B cell (primary cell): ENCODE measurements at regions of chr2 and their contacts with region 1.

Region 1: DNA sequence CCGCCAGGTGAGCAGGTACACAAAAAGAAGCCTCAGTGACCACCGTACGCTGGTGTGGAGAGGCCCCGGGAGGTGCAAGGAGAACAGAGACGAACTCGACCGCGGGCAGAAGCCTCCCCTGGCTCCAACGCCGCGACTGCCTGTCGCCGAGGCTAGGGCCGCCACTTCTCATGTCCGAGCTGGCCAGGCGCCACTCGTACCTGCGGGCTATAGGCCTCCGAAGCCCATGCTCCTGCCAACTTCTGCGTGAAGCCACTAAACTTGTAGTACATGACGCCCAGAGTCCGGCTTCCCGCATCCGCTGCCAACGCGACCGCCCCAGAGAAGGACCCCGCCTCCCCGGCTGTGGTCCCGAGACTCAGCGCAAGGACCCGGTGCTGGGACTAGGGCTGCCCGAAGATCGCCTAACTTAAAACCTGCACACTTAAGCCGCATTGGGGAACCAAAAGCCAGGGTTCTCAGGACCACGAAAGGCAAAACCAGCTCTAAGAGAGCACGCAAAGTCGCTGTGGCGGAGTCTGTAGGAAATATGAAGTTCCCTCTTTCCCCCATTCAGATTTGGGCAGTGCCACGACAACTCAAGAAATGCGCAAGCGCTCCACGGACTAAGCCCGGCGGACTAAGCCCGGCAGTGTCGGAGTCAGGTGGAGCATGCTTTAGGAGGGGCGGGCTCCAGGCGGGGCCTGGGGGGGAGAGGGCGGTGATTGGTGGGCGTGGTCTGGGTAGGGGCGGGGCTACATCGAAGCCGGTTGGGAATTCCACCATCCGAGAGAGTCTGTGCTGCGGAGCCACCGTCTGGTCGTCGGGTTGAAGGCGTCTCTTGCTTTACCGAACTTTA is at the start of gene COX7A2L:
- DNase-seq: peak; percentile 98
- ATAC-seq: peak; percentile 96
- H3K4me3 ChIP-seq: peak within 1 kb of the TSS; percentile 82 to 93 (median 87)
- H3K4me3 Mint-ChIP-seq: peak within 1 kb of the TSS; percentile 94
- H3K27ac ChIP-seq: peak within 1 kb of the TSS; percentile 92 to 93
- H3K27ac Mint-ChIP-seq: peak within 1 kb of the TSS; percentile 99
- H3K4me1 ChIP-seq: peaks cover 21 to 26% of the 10 kb centered on the region in 2 donors
- H3K4me1 Mint-ChIP-seq: peaks cover 40% of the 10 kb centered on the region
- H3K27me3 ChIP-seq: no peaks in the 10 kb centered on the region
- H3K27me3 Mint-ChIP-seq: peaks cover 11% of the 10 kb centered on the region
- CTCF ChIP-seq: peak; percentile 9
- total RNA-seq, gene COX7A2L: 66.7 and 68.1 TPM in 2 replicates

Region 2: DNA sequence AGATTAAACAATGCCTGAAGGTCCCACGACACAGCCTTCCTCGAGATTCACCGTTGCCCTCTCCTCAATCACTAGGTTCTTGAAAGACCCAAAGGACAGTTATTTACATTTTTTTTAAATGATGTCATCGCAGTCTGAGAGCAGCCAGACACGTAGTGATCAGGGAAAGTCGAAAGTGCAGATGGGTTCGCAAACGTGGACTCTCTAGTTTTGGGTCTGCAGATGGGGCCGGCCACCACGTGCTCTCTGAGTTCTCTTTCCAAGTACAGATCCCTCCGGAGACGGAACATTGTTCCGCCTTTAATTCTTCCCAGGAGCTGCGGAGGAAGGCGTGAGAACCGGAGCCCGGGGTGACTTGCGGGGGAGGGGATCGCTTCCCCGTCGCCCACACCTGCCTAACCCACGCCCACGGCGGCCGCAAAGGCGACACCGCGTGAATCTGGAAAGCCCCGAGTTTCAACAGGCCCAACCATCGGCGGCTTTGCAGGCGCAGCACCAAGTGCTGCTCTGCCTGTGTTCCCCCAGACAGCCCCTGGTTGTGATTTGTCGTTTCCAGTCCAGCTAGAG is 259.0 kb before region 1 on chr2:
- CTCF ChIA-PET with region 1: interaction called, 5 read pairs
- POLR2A ChIA-PET with region 1: no interaction called
- intact Hi-C with region 1: loop called (anchors 1 kb)
- DNase-seq: peak; percentile 98
- ATAC-seq: peak; percentile 69
- H3K4me3 ChIP-seq: peak overlapping the region; percentile 34 to 70 (median 52)
- H3K4me3 Mint-ChIP-seq: peak overlapping the region; percentile 88
- H3K27ac ChIP-seq: peak overlapping the region; percentile 98 to 99
- H3K27ac Mint-ChIP-seq: no peak overlapping the region
- H3K4me1 ChIP-seq: peaks cover 91 to 97% of the 10 kb centered on the region in 2 donors
- H3K4me1 Mint-ChIP-seq: peaks cover 70% of the 10 kb centered on the region
- H3K27me3 ChIP-seq: no peaks in the 10 kb centered on the region
- H3K27me3 Mint-ChIP-seq: no peaks in the 10 kb centered on the region
- CTCF ChIP-seq: no peak

Region 3: DNA sequence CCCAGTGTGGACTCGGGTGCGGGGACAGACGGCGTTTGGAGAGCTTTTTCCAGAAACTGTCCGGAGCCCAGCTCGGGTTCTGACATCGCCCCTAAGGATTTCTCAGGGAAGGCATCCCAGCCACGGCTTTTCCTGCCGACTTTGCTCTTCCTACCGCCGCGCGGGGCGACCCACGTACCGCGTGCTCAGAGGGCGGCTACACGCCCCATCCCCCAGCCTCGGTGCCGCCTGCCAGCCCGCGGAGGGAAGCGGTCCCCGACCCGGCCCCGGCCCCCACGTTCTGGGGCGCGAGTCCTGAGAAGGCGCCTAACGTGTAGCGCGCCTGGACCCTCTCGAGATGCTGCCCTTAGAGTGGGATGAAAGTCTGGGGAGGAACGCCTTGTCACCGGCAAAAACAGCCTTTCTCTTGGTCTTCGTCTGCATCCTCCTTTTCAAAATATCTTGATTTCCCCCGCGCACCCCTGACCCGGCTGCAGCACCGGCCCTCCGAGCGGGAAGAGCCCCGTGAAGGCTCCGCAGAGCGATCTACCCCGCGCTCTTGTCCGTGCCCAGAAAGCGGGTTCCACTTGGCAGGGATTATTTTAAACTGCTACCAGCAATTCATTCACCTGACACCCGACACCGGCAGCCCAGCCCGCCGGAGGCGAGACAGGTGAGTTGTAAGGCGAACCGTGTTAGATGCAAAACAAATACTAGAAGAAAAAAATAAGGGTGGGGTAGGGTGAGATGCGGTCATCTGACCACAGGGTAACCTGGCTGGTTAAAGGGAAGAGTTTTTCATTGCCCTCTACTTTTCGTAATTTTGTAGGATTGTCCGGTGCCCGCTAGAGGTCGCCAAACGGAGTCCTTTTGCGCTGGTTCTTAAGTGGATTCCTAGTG is 133.5 kb after region 1 on chr2:
- CTCF ChIA-PET with region 1: no interaction called
- POLR2A ChIA-PET with region 1: no interaction called
- intact Hi-C with region 1: loop called (anchors 2 kb)
- DNase-seq: peak; percentile 84
- ATAC-seq: peak; percentile 69
- H3K4me3 ChIP-seq: peak overlapping the region; percentile 46 to 62 (median 52)
- H3K4me3 Mint-ChIP-seq: peak overlapping the region; percentile 92
- H3K27ac ChIP-seq: no peak overlapping the region
- H3K27ac Mint-ChIP-seq: peak overlapping the region; percentile 12
- H3K4me1 ChIP-seq: peaks cover 11 to 14% of the 10 kb centered on the region in 2 donors
- H3K4me1 Mint-ChIP-seq: peaks cover 10% of the 10 kb centered on the region
- H3K27me3 ChIP-seq: peaks cover 0 to 33% (median 24%) of the 10 kb centered on the region in 4 experiments
- H3K27me3 Mint-ChIP-seq: peaks cover 25% of the 10 kb centered on the region
- CTCF ChIP-seq: peak; percentile 94

Region 4: DNA sequence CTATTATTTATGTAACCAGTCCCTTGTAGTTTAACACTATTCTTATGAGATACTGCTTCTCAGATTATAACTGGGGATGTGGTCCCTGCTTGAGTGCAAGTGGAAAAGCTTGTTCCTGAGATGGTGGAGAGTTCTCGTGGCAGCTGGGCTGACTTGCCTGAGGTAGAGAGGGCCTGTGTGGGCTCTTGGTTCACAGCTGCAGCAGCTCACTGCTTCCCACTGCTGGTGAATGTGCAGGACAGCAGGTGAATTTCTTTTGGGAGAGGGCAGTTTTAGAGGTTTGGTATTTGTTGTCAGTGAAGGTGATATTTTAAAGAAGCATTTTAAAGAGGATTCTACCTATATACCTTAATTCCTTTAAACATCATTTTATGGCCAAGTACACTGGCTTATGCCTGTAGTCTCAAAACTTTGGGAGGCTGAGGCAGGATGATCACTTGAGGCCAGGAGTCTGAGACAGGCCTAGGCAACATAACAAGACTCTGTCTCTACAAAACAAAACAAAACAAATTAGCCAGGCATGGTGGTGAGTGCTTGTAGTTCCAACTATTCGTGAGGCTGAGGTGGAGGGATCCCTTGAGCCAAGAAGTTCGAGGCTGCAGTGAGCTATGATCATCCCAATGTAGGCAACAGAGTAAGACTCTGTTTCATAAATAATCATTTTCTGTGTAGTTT is 302.1 kb after region 1 on chr2:
- CTCF ChIA-PET with region 1: interaction called, 3 read pairs
- POLR2A ChIA-PET with region 1: no interaction called
- intact Hi-C with region 1: loop called (anchors 1 kb)
- DNase-seq: peak; percentile 78
- ATAC-seq: peak; percentile 94
- H3K4me3 ChIP-seq: peak overlapping the region in 1 of 5 experiments; percentile 2
- H3K4me3 Mint-ChIP-seq: peak overlapping the region; percentile 2
- H3K27ac ChIP-seq: peak overlapping the region in 1 of 2 donors; percentile 63
- H3K27ac Mint-ChIP-seq: peak overlapping the region; percentile 21
- H3K4me1 ChIP-seq: peaks cover 16 to 18% of the 10 kb centered on the region in 2 donors
- H3K4me1 Mint-ChIP-seq: peaks cover 15% of the 10 kb centered on the region
- H3K27me3 ChIP-seq: no peaks in the 10 kb centered on the region
- H3K27me3 Mint-ChIP-seq: no peaks in the 10 kb centered on the region
- CTCF ChIP-seq: peak; percentile 99

Region 5: DNA sequence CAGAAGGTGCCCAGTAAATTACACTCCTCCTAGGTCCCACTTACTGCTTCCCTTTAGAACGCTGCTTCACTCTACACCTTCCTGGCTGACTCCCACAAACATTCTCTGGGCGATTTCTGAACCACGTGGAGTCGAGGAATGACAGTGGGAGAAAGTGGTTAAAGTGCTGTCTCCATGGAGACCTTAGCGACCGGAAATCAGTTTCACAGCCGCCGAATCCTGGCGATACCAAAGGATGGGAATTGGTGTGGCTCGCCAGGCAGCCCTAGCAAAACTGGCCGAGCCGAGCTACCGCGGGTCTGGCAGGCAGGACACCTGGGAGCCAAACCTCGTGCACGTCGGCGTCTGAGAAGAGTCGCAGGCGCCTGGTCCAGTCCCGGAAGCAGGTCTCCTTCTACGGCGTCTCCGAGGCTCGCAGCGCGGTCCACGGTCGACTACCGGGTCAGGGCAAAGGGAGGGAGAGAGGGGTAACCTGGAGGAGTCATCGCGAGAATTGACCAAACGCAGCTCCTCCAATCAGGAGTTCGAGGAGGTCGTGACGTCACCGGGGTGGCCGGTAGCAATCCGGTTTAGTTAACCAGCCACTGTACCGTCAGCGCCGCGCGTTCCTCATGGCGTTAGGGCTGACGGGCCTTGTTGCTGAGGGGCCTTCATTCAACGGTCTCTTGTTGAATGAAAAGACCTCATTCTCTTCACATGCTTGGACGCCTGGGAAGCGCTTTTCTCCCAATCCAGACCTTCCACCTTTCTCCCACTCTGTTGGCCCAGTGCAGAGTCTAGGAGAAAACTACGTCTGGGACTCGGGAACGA is 1234.7 kb after region 1 on chr2 and contains the start of gene THADA:
- CTCF ChIA-PET with region 1: no interaction called
- POLR2A ChIA-PET with region 1: no interaction called
- intact Hi-C with region 1: loop called (anchors 5 kb)
- DNase-seq: peak; percentile 98
- ATAC-seq: peak; percentile 98
- H3K4me3 ChIP-seq: peak within 1 kb of the TSS; percentile 69 to 94 (median 80)
- H3K4me3 Mint-ChIP-seq: peak within 1 kb of the TSS; percentile 98
- H3K27ac ChIP-seq: peak within 1 kb of the TSS; percentile 94
- H3K27ac Mint-ChIP-seq: peak within 1 kb of the TSS; percentile 96
- H3K4me1 ChIP-seq: peaks cover 12 to 21% of the 10 kb centered on the region in 2 donors
- H3K4me1 Mint-ChIP-seq: peaks cover 24% of the 10 kb centered on the region
- H3K27me3 ChIP-seq: no peaks in the 10 kb centered on the region
- H3K27me3 Mint-ChIP-seq: peaks cover 3% of the 10 kb centered on the region
- CTCF ChIP-seq: no peak
- total RNA-seq, gene THADA: 48.5 and 53.7 TPM in 2 replicates

Region 6: GRCh38 chr2:44167940-44168680 is 1807.0 kb after region 1 on chr2:
- CTCF ChIA-PET with region 1: no interaction called
- POLR2A ChIA-PET with region 1: no interaction called
- intact Hi-C with region 1: loop called (anchors 5 kb)
- DNase-seq: peak; percentile 99
- ATAC-seq: peak; percentile 77
- H3K4me3 ChIP-seq: peak overlapping the region; percentile 68 to 96 (median 87)
- H3K4me3 Mint-ChIP-seq: peak overlapping the region; percentile 96
- H3K27ac ChIP-seq: peak overlapping the region; percentile 98 to 100
- H3K27ac Mint-ChIP-seq: peak overlapping the region; percentile 96
- H3K4me1 ChIP-seq: peaks cover 25 to 29% of the 10 kb centered on the region in 2 donors
- H3K4me1 Mint-ChIP-seq: peaks cover 26% of the 10 kb centered on the region
- H3K27me3 ChIP-seq: no peaks in the 10 kb centered on the region
- H3K27me3 Mint-ChIP-seq: no peaks in the 10 kb centered on the region
- CTCF ChIP-seq: no peak